ENCODE measurements at regions of chr15 and their contacts with region 1.

Region 1: DNA sequence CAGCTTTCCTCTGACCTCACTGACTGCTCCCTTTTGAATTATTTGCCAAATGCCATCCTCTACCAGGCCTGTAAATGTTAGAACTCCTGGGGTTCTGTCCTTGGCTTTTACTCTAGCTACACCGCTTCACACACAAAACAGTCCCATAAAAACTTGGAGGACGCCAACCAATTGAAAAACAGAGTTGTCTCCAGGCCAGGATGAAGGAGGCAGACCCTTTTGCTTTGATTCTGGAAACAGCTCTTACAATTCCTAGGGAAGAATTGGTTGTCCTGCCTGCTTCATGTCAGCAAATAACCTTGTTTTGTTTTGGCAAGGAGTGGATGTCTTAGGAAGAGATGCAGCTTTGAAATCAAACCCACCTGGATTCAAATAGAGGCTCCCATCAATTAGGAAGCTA is 375.5 kb downstream of the UNC13C start:
- DNase-seq: no peak
- ATAC-seq: no peak
- H3K4me3 ChIP-seq: no peak overlapping the region
- H3K27ac ChIP-seq: no peak overlapping the region
- H3K4me1 ChIP-seq: no peaks in the 10 kb centered on the region
- H3K27me3 ChIP-seq: no peaks in the 10 kb centered on the region
- CTCF ChIP-seq: no peak
- EP300 ChIP-seq: no peak
- POLR2A ChIP-seq: no peak
- RAD21 ChIP-seq: no peak

Region 2: DNA sequence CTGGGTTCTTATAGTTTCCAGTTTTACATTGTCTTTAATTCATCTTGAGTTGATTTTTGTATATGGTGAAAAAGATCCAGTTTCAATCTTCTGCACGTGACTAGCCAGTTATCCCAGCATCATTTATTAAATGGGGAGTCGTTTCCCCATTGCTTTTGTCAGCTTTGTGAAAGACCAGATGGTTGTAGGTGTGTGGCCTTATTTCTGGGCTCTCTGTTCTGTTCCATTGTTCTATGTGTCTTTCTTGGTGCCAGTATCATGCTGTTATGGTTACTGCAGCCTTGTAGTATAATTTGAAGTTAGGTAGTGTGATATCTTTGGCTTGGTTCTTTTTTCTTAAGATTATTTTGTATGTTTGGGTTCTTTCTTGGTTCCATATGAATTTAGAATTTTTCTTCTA is 56.8 kb after region 1 on chr15:
- CTCF ChIA-PET with region 1: interaction called, 3 read pairs
- POLR2A ChIA-PET with region 1: no interaction called
- RAD21 ChIA-PET with region 1: no interaction called
- SMC1A ChIA-PET with region 1: no interaction called
- in situ Hi-C with region 1: no loop called
- intact Hi-C with region 1: loop called (anchors 10 kb)
- DNase-seq: no peak
- ATAC-seq: no peak
- H3K4me3 ChIP-seq: no peak overlapping the region
- H3K27ac ChIP-seq: no peak overlapping the region
- H3K4me1 ChIP-seq: no peaks in the 10 kb centered on the region
- H3K27me3 ChIP-seq: no peaks in the 10 kb centered on the region
- CTCF ChIP-seq: no peak
- EP300 ChIP-seq: no peak
- POLR2A ChIP-seq: no peak
- RAD21 ChIP-seq: no peak

Region 3: DNA sequence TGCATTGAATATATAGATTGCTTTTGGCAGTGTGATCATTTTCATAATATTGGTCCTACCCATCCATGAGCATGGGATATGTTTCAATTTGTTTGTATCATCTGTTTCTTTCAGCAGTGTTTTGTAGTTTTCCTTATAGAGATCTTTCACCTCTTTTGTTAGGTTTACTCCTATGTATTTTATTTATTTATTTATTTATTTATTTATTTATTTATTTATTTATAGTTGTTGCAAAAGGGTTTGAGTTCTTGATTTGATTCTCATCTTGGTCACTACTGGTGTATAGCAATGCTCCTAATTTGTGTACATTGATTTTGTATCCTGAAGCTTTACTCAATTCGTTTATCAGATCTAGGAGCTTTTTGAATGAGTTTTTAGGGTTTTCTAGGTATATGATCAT is 102.7 kb after region 1 on chr15:
- CTCF ChIA-PET with region 1: no interaction called
- POLR2A ChIA-PET with region 1: no interaction called
- RAD21 ChIA-PET with region 1: no interaction called
- SMC1A ChIA-PET with region 1: no interaction called
- in situ Hi-C with region 1: no loop called
- intact Hi-C with region 1: no loop called
- DNase-seq: no peak
- ATAC-seq: no peak
- H3K4me3 ChIP-seq: no peak overlapping the region
- H3K27ac ChIP-seq: no peak overlapping the region
- H3K4me1 ChIP-seq: no peaks in the 10 kb centered on the region
- H3K27me3 ChIP-seq: no peaks in the 10 kb centered on the region
- CTCF ChIP-seq: no peak
- EP300 ChIP-seq: no peak
- POLR2A ChIP-seq: no peak
- RAD21 ChIP-seq: no peak